GM10248 (cell line): ENCODE measurements at regions of chrX and their contacts with region 1.

Region 1: DNA sequence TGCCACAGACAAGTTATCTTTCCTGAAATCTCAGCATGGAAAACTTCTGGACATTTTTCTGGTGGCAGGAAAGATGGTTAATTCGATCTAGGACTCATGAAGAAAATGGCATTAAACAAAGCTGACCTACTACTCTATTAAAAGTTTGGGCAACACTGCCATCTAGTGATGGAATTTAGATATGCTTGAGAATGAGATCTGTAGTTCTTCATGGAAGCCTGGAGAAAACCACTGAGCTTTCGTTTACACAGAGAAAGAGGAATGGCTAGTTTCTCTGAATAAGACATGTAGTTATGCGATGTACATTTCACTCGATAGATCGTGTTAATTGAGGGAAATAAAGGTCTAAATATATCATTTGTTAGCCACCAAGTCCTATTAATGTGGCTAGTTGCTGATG is 51.7 kb upstream of the CHRDL1 start:
- DNase-seq: peak; percentile 35
- CTCF ChIP-seq: peak; percentile 25

Region 2: GRCh38 chrX:110440016-110440805 is 407.1 kb before region 1 on chrX:
- CTCF ChIA-PET with region 1: interaction called, 61 read pairs
- POLR2A ChIA-PET with region 1: no interaction called
- DNase-seq: no peak
- CTCF ChIP-seq: no peak

Region 3: GRCh38 chrX:110450050-110450449 is 397.3 kb before region 1 on chrX:
- CTCF ChIA-PET with region 1: interaction called, 61 read pairs
- POLR2A ChIA-PET with region 1: no interaction called
- DNase-seq: peak; percentile 62
- CTCF ChIP-seq: peak; percentile 68